ENCODE measurements at regions of chr10 and their contacts with region 1.

Region 1: DNA sequence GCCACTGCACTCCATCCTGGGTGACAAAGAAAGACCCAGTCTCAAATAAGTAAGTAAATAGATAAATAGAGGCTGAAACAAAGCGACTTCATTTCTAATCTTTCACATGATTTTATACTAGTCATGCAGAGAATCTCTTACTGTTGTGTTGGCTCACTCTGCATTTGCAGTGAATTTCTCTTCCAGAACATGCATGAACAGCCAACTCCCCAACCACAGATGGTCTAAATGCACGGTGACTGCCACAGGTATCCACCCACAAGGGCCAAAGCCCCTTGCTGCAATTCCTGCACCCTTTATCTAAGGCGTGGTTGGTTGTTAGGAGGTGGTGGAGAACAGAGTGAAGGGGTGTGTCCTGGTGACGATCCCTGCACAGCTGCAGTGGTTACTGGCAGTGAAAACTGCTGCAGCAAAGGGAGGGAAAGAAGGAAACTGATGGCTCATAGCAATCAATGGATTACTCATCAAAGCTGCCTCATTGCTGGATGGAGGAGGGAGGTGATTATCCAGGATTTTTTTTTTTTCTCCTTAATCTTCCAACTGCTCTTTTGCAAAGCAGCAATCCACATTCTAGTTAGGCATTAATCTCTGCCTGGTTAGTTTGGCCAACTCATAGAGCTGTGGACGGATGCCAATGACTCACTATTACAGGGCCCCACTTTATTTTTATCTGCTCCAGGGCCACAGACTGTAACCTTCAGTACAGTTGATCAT is 50.6 kb downstream of the PRTFDC1 start:
- DNase-seq: no peak
- H3K4me3 Mint-ChIP-seq: no peak overlapping the region
- H3K27ac Mint-ChIP-seq: peak overlapping the region; percentile 73
- H3K4me1 Mint-ChIP-seq: peaks cover 33% of the 10 kb centered on the region
- H3K27me3 Mint-ChIP-seq: no peaks in the 10 kb centered on the region

Region 2: GRCh38 chr10:24784061-24784460 is 117.8 kb before region 1 on chr10:
- intact Hi-C with region 1: no loop called
- DNase-seq: no peak
- H3K4me3 Mint-ChIP-seq: no peak overlapping the region
- H3K27ac Mint-ChIP-seq: no peak overlapping the region
- H3K4me1 Mint-ChIP-seq: no peaks in the 10 kb centered on the region
- H3K27me3 Mint-ChIP-seq: peaks cover 2% of the 10 kb centered on the region

Region 3: GRCh38 chr10:24866604-24867583 is 34.9 kb before region 1 on chr10:
- intact Hi-C with region 1: loop called (anchors 5 kb)
- DNase-seq: no peak
- H3K4me3 Mint-ChIP-seq: peak overlapping the region; percentile 2
- H3K27ac Mint-ChIP-seq: peak overlapping the region; percentile 7
- H3K4me1 Mint-ChIP-seq: peaks cover 42% of the 10 kb centered on the region
- H3K27me3 Mint-ChIP-seq: no peaks in the 10 kb centered on the region

Region 4: GRCh38 chr10:24952707-24953645 is 51.1 kb after region 1 on chr10:
- intact Hi-C with region 1: loop called (anchors 5 kb)
- DNase-seq: peak; percentile 7
- H3K4me3 Mint-ChIP-seq: peak overlapping the region; percentile 79
- H3K27ac Mint-ChIP-seq: no peak overlapping the region
- H3K4me1 Mint-ChIP-seq: peaks cover 16% of the 10 kb centered on the region
- H3K27me3 Mint-ChIP-seq: no peaks in the 10 kb centered on the region

Region 5: DNA sequence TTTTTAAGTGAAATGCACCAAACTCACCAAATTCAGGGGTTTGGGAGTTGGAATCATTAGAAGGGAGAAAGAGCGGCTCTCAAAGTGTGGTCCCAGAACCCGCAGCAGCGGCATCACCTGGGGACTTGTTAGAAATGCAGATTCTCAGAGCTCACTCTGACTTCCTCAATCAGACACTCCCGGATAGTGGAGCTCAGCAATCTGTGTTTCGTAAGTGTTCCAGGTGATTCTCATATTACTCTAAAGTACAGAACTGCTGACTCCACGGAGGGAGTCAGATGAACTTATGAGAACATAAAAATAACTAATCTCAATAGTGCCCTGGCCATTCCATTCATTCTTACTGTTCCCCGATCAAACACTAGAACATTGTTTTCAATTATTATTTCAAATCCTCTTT is 673.5 kb after region 1 on chr10:
- intact Hi-C with region 1: no loop called
- DNase-seq: no peak
- H3K4me3 Mint-ChIP-seq: no peak overlapping the region
- H3K27ac Mint-ChIP-seq: no peak overlapping the region
- H3K4me1 Mint-ChIP-seq: no peaks in the 10 kb centered on the region
- H3K27me3 Mint-ChIP-seq: no peaks in the 10 kb centered on the region

Measured in activated T-helper 1 cell treated with anti-CD3 and anti-CD28 coated beads, Interleukin-12 subunit alpha, Interleukin-12 subunit beta, Interleukin-2, Interleukin-4 antibody, amounts not matched to agents 30 ng/mL and 10 ng/mL and 1 ng/mL, durations not matched to agents 14 hours and 24 hours and 36 hours (primary cell).